ENCODE measurements at regions of chr5 and their contacts with region 1.

Region 1: GRCh38 chr5:27312291-27312893 is 274.0 kb upstream of the CDH9 start:
- DNase-seq: no peak
- ATAC-seq: no peak
- H3K4me3 ChIP-seq: no peak overlapping the region
- H3K27ac ChIP-seq: no peak overlapping the region
- H3K4me1 ChIP-seq: no peaks in the 10 kb centered on the region
- H3K27me3 ChIP-seq: no peaks in the 10 kb centered on the region
- CTCF ChIP-seq: no peak
- EP300 ChIP-seq: no peak
- POLR2A ChIP-seq: no peak
- RAD21 ChIP-seq: no peak

Region 2: DNA sequence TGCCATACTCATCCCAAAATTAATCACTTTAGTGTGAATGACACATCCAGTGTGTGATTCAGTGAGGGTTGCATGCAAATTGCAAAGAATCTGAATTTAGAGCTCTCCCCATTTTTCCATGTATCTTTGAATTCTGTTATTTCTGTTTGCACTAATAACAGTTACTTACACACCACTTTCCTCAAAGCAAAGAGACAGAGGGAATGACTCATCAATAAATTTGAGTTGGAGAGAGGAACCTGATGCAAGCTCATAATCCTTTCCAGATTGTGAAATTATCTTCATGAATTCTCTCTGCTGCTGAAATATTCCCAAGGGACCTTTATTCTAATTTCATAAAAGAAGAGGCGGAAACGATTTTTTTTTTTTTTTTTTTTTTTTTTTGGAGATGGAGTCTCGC is 478.8 kb before region 1 on chr5:
- CTCF ChIA-PET with region 1: no interaction called
- POLR2A ChIA-PET with region 1: no interaction called
- in situ Hi-C with region 1: no loop called
- intact Hi-C with region 1: no loop called
- DNase-seq: no peak
- ATAC-seq: no peak
- H3K4me3 ChIP-seq: no peak overlapping the region
- H3K27ac ChIP-seq: no peak overlapping the region
- H3K4me1 ChIP-seq: no peaks in the 10 kb centered on the region
- H3K27me3 ChIP-seq: no peaks in the 10 kb centered on the region
- CTCF ChIP-seq: no peak
- EP300 ChIP-seq: no peak
- POLR2A ChIP-seq: no peak
- RAD21 ChIP-seq: no peak

Region 3: GRCh38 chr5:26942481-26942880 is 369.9 kb before region 1 on chr5:
- CTCF ChIA-PET with region 1: no interaction called
- POLR2A ChIA-PET with region 1: no interaction called
- in situ Hi-C with region 1: no loop called
- intact Hi-C with region 1: no loop called
- DNase-seq: no peak
- ATAC-seq: no peak
- H3K4me3 ChIP-seq: no peak overlapping the region
- H3K27ac ChIP-seq: no peak overlapping the region
- H3K4me1 ChIP-seq: no peaks in the 10 kb centered on the region
- H3K27me3 ChIP-seq: no peaks in the 10 kb centered on the region
- CTCF ChIP-seq: no peak
- EP300 ChIP-seq: no peak
- POLR2A ChIP-seq: no peak
- RAD21 ChIP-seq: no peak

Region 4: DNA sequence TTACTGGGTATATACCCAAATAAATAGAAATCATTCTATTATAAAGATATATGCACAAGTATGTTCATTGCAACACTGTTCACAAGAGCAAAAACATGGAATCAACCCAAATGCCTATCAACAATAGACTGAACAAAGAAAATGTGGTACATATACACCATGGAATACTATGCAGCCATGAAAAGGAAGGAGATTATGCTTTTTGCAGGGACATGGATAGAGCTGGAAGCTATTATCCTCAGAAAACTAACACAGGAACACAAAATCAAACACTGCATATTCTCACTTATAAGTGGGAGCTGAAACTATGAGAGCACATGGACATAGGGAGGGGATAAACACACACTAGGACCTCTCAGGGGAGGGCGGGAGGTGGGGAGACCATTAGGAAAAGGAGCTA is 24.4 kb after region 1 on chr5:
- CTCF ChIA-PET with region 1: no interaction called
- POLR2A ChIA-PET with region 1: no interaction called
- in situ Hi-C with region 1: no loop called
- intact Hi-C with region 1: loop called (anchors 1 kb)
- DNase-seq: no peak
- ATAC-seq: no peak
- H3K4me3 ChIP-seq: no peak overlapping the region
- H3K27ac ChIP-seq: no peak overlapping the region
- H3K4me1 ChIP-seq: no peaks in the 10 kb centered on the region
- H3K27me3 ChIP-seq: no peaks in the 10 kb centered on the region
- CTCF ChIP-seq: no peak
- EP300 ChIP-seq: no peak
- POLR2A ChIP-seq: no peak
- RAD21 ChIP-seq: no peak